Breast epithelium (tissue), 4 donors: ENCODE measurements at regions of chr16 and their contacts with region 1.

Region 1: GRCh38 chr16:81259916-81260315 is 21.4 kb downstream of the BCO1 start:
- DNase-seq: no peak
- H3K4me3 ChIP-seq: no peak overlapping the region
- H3K27ac ChIP-seq: no peak overlapping the region
- H3K4me1 ChIP-seq: no peaks in the 10 kb centered on the region
- H3K27me3 ChIP-seq: no peaks in the 10 kb centered on the region
- CTCF ChIP-seq: no peak
- POLR2A ChIP-seq: no peak

Region 2: GRCh38 chr16:81469710-81470535 is 210.0 kb after region 1 on chr16:
- intact Hi-C with region 1: loop called (anchors 5 kb)
- DNase-seq: no peak
- H3K4me3 ChIP-seq: no peak overlapping the region
- H3K27ac ChIP-seq: peak overlapping the region in 1 of 2 donors; percentile 16
- H3K4me1 ChIP-seq: peaks cover 0 to 7% of the 10 kb centered on the region in 2 donors
- H3K27me3 ChIP-seq: no peaks in the 10 kb centered on the region
- CTCF ChIP-seq: no peak
- POLR2A ChIP-seq: no peak